Sigmoid colon (tissue), 7 donors: ENCODE measurements at regions of chr4 and their contacts with region 1.

Region 1: GRCh38 chr4:109998867-109999584 is 86.3 kb downstream of the EGF start:
- DNase-seq: no peak
- H3K4me3 ChIP-seq: no peak overlapping the region
- H3K27ac ChIP-seq: no peak overlapping the region
- H3K4me1 ChIP-seq: no peaks in the 10 kb centered on the region
- H3K27me3 ChIP-seq: no peaks in the 10 kb centered on the region
- CTCF ChIP-seq: peak; percentile 32 to 44 (median 40)
- EP300 ChIP-seq: no peak
- POLR2A ChIP-seq: no peak

Region 2: DNA sequence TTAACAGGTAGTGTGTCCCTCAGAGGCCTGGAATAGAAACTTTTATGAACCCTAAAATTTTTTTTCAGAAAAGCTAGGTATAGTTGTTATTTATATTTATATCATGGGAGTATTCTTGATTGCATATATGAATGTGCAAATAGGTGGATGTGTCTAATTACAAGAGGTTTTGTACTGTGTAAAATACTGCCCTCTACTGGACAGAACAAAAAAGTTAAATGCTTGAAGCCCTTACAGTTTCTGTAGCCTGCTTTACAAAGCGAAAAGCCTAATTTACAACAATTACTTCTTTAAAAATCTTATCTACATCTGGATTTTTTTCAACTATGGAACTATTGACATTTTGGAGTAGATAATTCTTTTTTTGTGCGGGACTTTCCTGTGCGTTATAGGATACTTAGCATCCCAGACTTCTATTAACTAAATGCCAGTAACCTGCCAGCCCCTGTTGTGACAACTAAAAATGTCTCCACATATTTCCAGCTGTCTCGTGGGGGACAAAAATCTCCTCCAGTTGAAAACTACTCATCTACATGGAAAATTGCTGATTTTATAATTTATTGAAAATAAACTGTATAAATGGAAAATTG is 512.0 kb after region 1 on chr4:
- intact Hi-C with region 1: loop called (anchors 2 kb)
- DNase-seq: no peak
- H3K4me3 ChIP-seq: no peak overlapping the region
- H3K27ac ChIP-seq: no peak overlapping the region
- H3K4me1 ChIP-seq: no peaks in the 10 kb centered on the region
- H3K27me3 ChIP-seq: no peaks in the 10 kb centered on the region
- CTCF ChIP-seq: peak in 3 of 4 experiments; percentile 30 to 66 (median 34)
- EP300 ChIP-seq: no peak
- POLR2A ChIP-seq: no peak